Activated CD4-positive, alpha-beta T cell treated with anti-CD3 and anti-CD28 coated beads, Interleukin-2, amount 10 ng/mL, durations not matched to agents 7 days and 5 days (primary cell): ENCODE measurements at regions of chr18 and their contacts with region 1.

Region 1: GRCh38 chr18:6980363-6980762 is 137.2 kb downstream of the LAMA1 start:
- DNase-seq: no peak
- H3K4me3 Mint-ChIP-seq: no peak overlapping the region
- H3K27ac Mint-ChIP-seq: no peak overlapping the region
- H3K4me1 Mint-ChIP-seq: no peaks in the 10 kb centered on the region
- H3K27me3 Mint-ChIP-seq: no peaks in the 10 kb centered on the region

Region 2: DNA sequence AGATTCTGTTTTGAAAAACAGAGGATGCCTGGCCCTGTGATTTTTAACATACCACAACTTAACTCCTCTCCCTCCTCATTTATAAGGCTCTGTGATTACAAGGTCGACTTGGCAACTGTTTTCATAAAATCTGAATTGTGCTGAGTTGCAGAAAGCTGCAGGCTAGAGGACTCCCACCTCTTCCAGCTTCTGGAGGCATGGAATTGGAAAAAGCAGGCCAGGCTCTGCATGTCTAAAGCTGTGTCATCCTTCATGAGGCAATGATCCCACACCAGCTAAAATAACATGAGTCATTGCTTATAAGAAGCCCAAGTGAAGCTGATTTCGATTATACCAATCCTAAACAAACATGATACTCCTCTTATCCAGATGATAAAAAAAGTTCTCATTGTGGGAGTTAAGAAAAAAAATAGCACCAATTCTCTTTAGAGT is 239.1 kb before region 1 on chr18:
- CTCF ChIA-PET with region 1: interaction called, 11 read pairs
- POLR2A ChIA-PET with region 1: no interaction called
- DNase-seq: no peak
- H3K4me3 Mint-ChIP-seq: no peak overlapping the region
- H3K27ac Mint-ChIP-seq: no peak overlapping the region
- H3K4me1 Mint-ChIP-seq: no peaks in the 10 kb centered on the region
- H3K27me3 Mint-ChIP-seq: no peaks in the 10 kb centered on the region

Region 3: GRCh38 chr18:6962571-6963451 is 17.6 kb before region 1 on chr18:
- CTCF ChIA-PET with region 1: no interaction called
- POLR2A ChIA-PET with region 1: no interaction called
- DNase-seq: no peak
- H3K4me3 Mint-ChIP-seq: no peak overlapping the region
- H3K27ac Mint-ChIP-seq: no peak overlapping the region
- H3K4me1 Mint-ChIP-seq: no peaks in the 10 kb centered on the region
- H3K27me3 Mint-ChIP-seq: no peaks in the 10 kb centered on the region